OCI-LY7 (cell line): ENCODE measurements at regions of chr6 and their contacts with region 1.

Region 1: DNA sequence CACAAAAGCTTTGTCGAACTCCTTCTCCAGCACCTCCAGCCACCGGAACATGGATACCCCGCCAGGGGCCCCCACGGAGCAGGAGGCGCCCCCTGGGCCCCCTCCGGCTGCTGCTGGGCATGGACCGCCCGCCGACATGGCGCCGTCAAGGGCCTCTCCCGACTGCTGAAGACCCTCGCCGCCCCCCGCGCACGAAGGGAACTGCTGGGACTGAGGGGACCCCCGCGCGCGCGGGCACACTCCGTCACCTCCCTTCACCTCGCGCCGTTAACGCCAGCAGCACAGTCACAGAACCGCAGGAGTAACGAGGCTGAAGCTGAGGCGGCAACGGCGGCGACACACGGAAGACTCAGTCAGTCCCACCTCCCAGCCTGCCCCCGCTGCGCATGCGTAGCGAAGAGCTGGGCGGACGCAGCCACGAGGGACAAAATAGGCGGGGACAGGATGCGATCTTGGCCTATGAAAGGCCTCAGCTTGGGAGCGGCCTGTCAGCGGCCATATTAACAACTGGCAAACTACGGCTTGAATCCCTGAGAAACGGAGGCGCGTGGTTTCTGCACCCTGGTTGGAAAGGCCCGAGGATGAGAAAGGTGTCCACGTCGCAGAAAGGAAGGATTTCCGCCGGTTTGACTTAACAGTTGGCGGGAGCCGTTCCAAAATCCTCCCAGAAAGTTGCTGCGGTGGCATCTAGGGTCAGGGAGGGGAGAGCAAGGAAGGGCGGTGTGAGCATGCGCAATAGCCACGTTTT is at the start of gene GOPC:
- DNase-seq: peak; percentile 98
- H3K4me3 ChIP-seq: peak within 1 kb of the TSS; percentile 92
- H3K27ac ChIP-seq: peak within 1 kb of the TSS; percentile 53
- H3K4me1 ChIP-seq: peaks cover 36% of the 10 kb centered on the region
- CTCF ChIP-seq: peak; percentile 51
- total RNA-seq, gene GOPC: 20.1 and 21.0 TPM in 2 replicates

Region 2: GRCh38 chr6:117346142-117346930 is 256.0 kb before region 1 on chr6:
- CTCF ChIA-PET with region 1: no interaction called
- POLR2A ChIA-PET with region 1: no interaction called
- intact Hi-C with region 1: loop called (anchors 1 kb)
- DNase-seq: peak; percentile 28
- H3K4me3 ChIP-seq: no peak overlapping the region
- H3K27ac ChIP-seq: no peak overlapping the region
- H3K4me1 ChIP-seq: no peaks in the 10 kb centered on the region
- CTCF ChIP-seq: peak; percentile 80

Region 3: GRCh38 chr6:117449549-117450439 is 152.5 kb before region 1 on chr6:
- CTCF ChIA-PET with region 1: no interaction called
- POLR2A ChIA-PET with region 1: no interaction called
- intact Hi-C with region 1: loop called (anchors 1 kb)
- DNase-seq: peak; percentile 62
- H3K4me3 ChIP-seq: no peak overlapping the region
- H3K27ac ChIP-seq: no peak overlapping the region
- H3K4me1 ChIP-seq: no peaks in the 10 kb centered on the region
- CTCF ChIP-seq: peak; percentile 86

Region 4: GRCh38 chr6:117555882-117556498 is 46.3 kb before region 1 on chr6:
- CTCF ChIA-PET with region 1: no interaction called
- POLR2A ChIA-PET with region 1: no interaction called
- intact Hi-C with region 1: loop called (anchors 2 kb)
- DNase-seq: peak; percentile 32
- H3K4me3 ChIP-seq: no peak overlapping the region
- H3K27ac ChIP-seq: no peak overlapping the region
- H3K4me1 ChIP-seq: no peaks in the 10 kb centered on the region
- CTCF ChIP-seq: peak; percentile 95

Region 5: GRCh38 chr6:117585647-117586046 is 16.7 kb before region 1 on chr6:
- CTCF ChIA-PET with region 1: interaction called, 7 read pairs
- POLR2A ChIA-PET with region 1: interaction called, 18 read pairs
- intact Hi-C with region 1: no loop called
- DNase-seq: no peak
- H3K4me3 ChIP-seq: no peak overlapping the region
- H3K27ac ChIP-seq: no peak overlapping the region
- H3K4me1 ChIP-seq: no peaks in the 10 kb centered on the region
- CTCF ChIP-seq: no peak

Region 6: GRCh38 chr6:117674991-117675657 is 72.8 kb after region 1 on chr6 and contains the start of gene NUS1:
- CTCF ChIA-PET with region 1: no interaction called
- POLR2A ChIA-PET with region 1: no interaction called
- intact Hi-C with region 1: loop called (anchors 2 kb)
- DNase-seq: peak; percentile 97
- H3K4me3 ChIP-seq: peak within 1 kb of the TSS; percentile 81
- H3K27ac ChIP-seq: no peak within 1 kb of the TSS
- H3K4me1 ChIP-seq: peaks cover 19% of the 10 kb centered on the region
- CTCF ChIP-seq: peak; percentile 82
- total RNA-seq, gene NUS1: 8.9 and 9.8 TPM in 2 replicates